CD8-positive, alpha-beta T cell (primary cell): ENCODE measurements at regions of chr15 and their contacts with region 1.

Region 1: GRCh38 chr15:60916679-60917460 is 312.2 kb downstream of the RORA start:
- DNase-seq: peak; percentile 70 to 95 (median 88)
- ATAC-seq: peak; percentile 99
- H3K4me3 ChIP-seq: no peak overlapping the region
- H3K4me3 Mint-ChIP-seq: no peak overlapping the region
- H3K27ac ChIP-seq: peak overlapping the region in 1 of 2 experiments; percentile 31
- H3K27ac Mint-ChIP-seq: peak overlapping the region; percentile 72
- H3K4me1 ChIP-seq: peaks cover 8% of the 10 kb centered on the region
- H3K4me1 Mint-ChIP-seq: peaks cover 11% of the 10 kb centered on the region
- H3K27me3 ChIP-seq: no peaks in the 10 kb centered on the region
- H3K27me3 Mint-ChIP-seq: no peaks in the 10 kb centered on the region
- CTCF ChIP-seq: peak; percentile 92

Region 2: GRCh38 chr15:59051873-59052861 is 1864.7 kb before region 1 on chr15:
- CTCF ChIA-PET with region 1: no interaction called
- POLR2A ChIA-PET with region 1: no interaction called
- intact Hi-C with region 1: no loop called
- DNase-seq: peak in 1 of 9 experiments; percentile 3
- ATAC-seq: no peak
- H3K4me3 ChIP-seq: no peak overlapping the region
- H3K4me3 Mint-ChIP-seq: no peak overlapping the region
- H3K27ac ChIP-seq: no peak overlapping the region
- H3K27ac Mint-ChIP-seq: peak overlapping the region; percentile 58
- H3K4me1 ChIP-seq: peaks cover 4% of the 10 kb centered on the region
- H3K4me1 Mint-ChIP-seq: peaks cover 26% of the 10 kb centered on the region
- H3K27me3 ChIP-seq: no peaks in the 10 kb centered on the region
- H3K27me3 Mint-ChIP-seq: no peaks in the 10 kb centered on the region
- CTCF ChIP-seq: no peak

Region 3: GRCh38 chr15:60478566-60479360 is 438.1 kb before region 1 on chr15 and contains the start of gene ICE2:
- CTCF ChIA-PET with region 1: no interaction called
- POLR2A ChIA-PET with region 1: no interaction called
- intact Hi-C with region 1: loop called in 1 of 2 experiments (anchors 1 kb)
- DNase-seq: peak; percentile 88 to 98 (median 96)
- ATAC-seq: peak; percentile 90
- H3K4me3 ChIP-seq: peak within 1 kb of the TSS; percentile 68 to 89
- H3K4me3 Mint-ChIP-seq: peak within 1 kb of the TSS; percentile 98
- H3K27ac ChIP-seq: peak within 1 kb of the TSS; percentile 85 to 92
- H3K27ac Mint-ChIP-seq: peak within 1 kb of the TSS; percentile 100
- H3K4me1 ChIP-seq: peaks cover 39% of the 10 kb centered on the region
- H3K4me1 Mint-ChIP-seq: peaks cover 72% of the 10 kb centered on the region
- H3K27me3 ChIP-seq: no peaks in the 10 kb centered on the region
- H3K27me3 Mint-ChIP-seq: no peaks in the 10 kb centered on the region
- CTCF ChIP-seq: no peak
- total RNA-seq, gene ICE2: 13.9 to 18.3 TPM

Region 4: GRCh38 chr15:60592371-60593169 is 324.3 kb before region 1 on chr15:
- CTCF ChIA-PET with region 1: interaction called, 100 read pairs
- POLR2A ChIA-PET with region 1: interaction called, 9 read pairs
- intact Hi-C with region 1: no loop called
- DNase-seq: peak; percentile 71 to 93 (median 87)
- ATAC-seq: peak; percentile 88
- H3K4me3 ChIP-seq: peak overlapping the region; percentile 71 to 81
- H3K4me3 Mint-ChIP-seq: peak overlapping the region; percentile 84
- H3K27ac ChIP-seq: peak overlapping the region; percentile 75 to 83
- H3K27ac Mint-ChIP-seq: peak overlapping the region; percentile 88
- H3K4me1 ChIP-seq: peaks cover 33% of the 10 kb centered on the region
- H3K4me1 Mint-ChIP-seq: peaks cover 35% of the 10 kb centered on the region
- H3K27me3 ChIP-seq: no peaks in the 10 kb centered on the region
- H3K27me3 Mint-ChIP-seq: no peaks in the 10 kb centered on the region
- CTCF ChIP-seq: no peak

Region 5: DNA sequence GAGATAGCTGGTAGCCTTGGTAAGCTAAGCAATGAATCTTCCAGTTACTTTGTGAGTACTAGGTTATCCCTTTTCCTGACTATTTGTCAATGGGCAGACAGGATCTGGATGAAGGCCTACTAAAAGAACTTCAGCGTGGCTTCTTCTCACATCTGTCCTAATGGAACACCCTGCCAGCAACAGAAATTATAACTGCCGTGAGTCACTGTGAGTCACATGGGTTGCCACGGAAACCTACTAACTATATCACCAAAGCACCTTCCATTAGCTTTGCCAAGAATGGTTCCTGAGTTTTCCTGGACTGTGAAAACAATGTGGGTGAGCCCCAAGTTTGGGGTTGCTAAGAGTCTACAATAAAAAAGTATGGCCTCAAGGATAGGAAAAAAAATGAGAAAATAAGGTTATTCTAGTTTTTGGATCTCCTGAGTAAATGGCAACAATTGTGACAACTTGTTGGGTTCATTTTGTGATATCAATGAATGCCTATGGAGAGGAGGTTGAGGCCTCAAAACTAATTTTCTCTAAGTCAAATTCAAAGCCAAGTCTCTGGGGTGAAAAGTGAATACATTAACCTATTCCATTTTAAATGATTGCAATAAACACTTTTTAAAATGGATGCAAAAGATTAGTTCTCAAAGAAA is 242.8 kb before region 1 on chr15:
- CTCF ChIA-PET with region 1: interaction called, 11 read pairs
- POLR2A ChIA-PET with region 1: no interaction called
- intact Hi-C with region 1: no loop called
- DNase-seq: peak in 2 of 9 experiments; percentile 15 to 22
- ATAC-seq: no peak
- H3K4me3 ChIP-seq: no peak overlapping the region
- H3K4me3 Mint-ChIP-seq: no peak overlapping the region
- H3K27ac ChIP-seq: no peak overlapping the region
- H3K27ac Mint-ChIP-seq: no peak overlapping the region
- H3K4me1 ChIP-seq: no peaks in the 10 kb centered on the region
- H3K4me1 Mint-ChIP-seq: peaks cover 2% of the 10 kb centered on the region
- H3K27me3 ChIP-seq: no peaks in the 10 kb centered on the region
- H3K27me3 Mint-ChIP-seq: no peaks in the 10 kb centered on the region
- CTCF ChIP-seq: no peak

Region 6: DNA sequence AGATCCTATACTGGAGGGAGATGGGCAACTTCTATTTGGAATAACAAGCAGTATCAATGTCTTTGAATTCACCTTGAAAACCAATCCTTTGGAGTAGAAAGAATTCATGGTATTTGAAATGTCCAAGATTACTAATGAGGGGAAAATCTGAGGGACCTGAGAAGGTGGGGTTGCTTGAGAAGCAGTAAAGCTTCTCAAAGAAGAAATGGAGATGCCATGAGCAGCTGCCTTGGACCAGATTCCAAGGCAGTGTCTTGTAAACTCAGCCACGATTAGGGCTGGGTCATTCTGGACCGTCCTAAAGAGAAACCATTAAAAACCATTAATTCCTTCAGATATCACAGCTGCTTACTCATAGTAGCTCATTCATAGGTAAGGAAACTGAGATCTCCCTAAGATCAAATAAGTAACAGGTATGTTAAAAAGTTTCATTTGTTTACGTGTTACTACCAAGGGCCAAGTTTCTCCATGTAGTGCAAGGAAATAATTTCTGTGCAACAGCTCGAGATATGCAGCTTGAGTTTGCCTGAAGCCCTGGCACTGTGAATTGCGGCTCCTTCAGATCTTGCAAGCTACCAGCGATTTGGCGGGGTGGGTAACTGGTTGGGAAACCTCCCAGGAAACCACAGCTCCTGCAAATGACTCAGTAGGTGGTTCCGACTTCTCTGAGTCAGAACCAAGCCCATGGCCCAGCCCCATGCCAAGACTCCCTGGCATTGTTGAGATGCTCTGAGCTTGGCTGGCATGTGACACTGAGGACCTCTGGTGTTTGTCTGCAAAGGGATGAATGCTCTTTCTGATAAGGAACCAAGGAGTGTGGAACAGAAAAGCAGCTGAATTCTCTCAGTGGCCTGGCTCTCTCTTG is 15.4 kb after region 1 on chr15:
- CTCF ChIA-PET with region 1: interaction called, 19 read pairs
- POLR2A ChIA-PET with region 1: interaction called, 5 read pairs
- intact Hi-C with region 1: no loop called
- DNase-seq: peak; percentile 6 to 77 (median 52)
- ATAC-seq: peak; percentile 73
- H3K4me3 ChIP-seq: no peak overlapping the region
- H3K4me3 Mint-ChIP-seq: no peak overlapping the region
- H3K27ac ChIP-seq: no peak overlapping the region
- H3K27ac Mint-ChIP-seq: no peak overlapping the region
- H3K4me1 ChIP-seq: peaks cover 8% of the 10 kb centered on the region
- H3K4me1 Mint-ChIP-seq: peaks cover 7% of the 10 kb centered on the region
- H3K27me3 ChIP-seq: no peaks in the 10 kb centered on the region
- H3K27me3 Mint-ChIP-seq: peaks cover 3% of the 10 kb centered on the region
- CTCF ChIP-seq: no peak

Region 7: GRCh38 chr15:61130945-61131942 is 214.4 kb after region 1 on chr15:
- CTCF ChIA-PET with region 1: no interaction called
- POLR2A ChIA-PET with region 1: no interaction called
- intact Hi-C with region 1: no loop called
- DNase-seq: no peak
- ATAC-seq: no peak
- H3K4me3 ChIP-seq: no peak overlapping the region
- H3K4me3 Mint-ChIP-seq: no peak overlapping the region
- H3K27ac ChIP-seq: no peak overlapping the region
- H3K27ac Mint-ChIP-seq: no peak overlapping the region
- H3K4me1 ChIP-seq: no peaks in the 10 kb centered on the region
- H3K4me1 Mint-ChIP-seq: no peaks in the 10 kb centered on the region
- H3K27me3 ChIP-seq: no peaks in the 10 kb centered on the region
- H3K27me3 Mint-ChIP-seq: peaks cover 23% of the 10 kb centered on the region
- CTCF ChIP-seq: no peak

Region 8: DNA sequence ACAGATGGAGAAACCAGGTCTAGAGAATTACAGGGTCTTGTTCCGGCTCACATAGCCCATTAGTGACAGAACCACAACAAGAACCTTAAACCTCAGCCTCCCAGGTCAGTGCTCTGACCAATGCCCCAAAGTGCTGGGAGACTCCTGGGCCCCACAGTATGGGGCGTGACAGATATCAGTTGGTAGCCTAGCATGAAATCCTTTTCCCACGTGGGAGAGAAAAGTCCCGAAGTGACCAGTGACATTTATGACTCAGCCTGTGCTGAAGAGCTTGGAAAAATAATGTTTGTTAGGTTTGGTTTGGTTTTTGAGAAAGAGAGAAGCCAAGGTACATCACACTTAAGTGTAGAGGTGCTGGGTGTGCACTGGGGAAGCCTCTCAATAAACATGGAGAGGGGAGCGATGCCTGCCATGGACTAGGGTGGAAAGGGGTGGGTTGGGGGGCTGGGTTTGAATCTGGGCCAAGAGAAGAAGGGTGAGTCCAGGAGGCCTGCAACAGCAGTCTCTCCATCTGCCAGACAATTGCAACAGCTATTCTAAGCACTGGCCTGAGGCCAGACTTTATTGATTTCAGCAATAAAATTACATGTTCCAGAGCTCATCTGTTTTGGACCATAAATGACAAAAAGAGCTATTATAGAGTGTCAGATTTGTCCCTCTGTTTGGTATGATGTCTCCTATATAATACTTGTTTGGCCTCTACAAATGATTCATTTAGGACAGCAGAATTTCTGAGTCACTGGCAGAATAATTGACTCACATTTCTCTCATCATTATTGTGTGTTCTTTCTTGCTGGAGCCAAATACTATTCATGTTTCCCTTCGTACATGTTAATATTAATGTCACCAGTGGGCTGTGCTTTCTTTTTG is 1193.3 kb after region 1 on chr15:
- CTCF ChIA-PET with region 1: no interaction called
- POLR2A ChIA-PET with region 1: no interaction called
- intact Hi-C with region 1: no loop called
- DNase-seq: no peak
- ATAC-seq: no peak
- H3K4me3 ChIP-seq: no peak overlapping the region
- H3K4me3 Mint-ChIP-seq: no peak overlapping the region
- H3K27ac ChIP-seq: no peak overlapping the region
- H3K27ac Mint-ChIP-seq: no peak overlapping the region
- H3K4me1 ChIP-seq: no peaks in the 10 kb centered on the region
- H3K4me1 Mint-ChIP-seq: no peaks in the 10 kb centered on the region
- H3K27me3 ChIP-seq: no peaks in the 10 kb centered on the region
- H3K27me3 Mint-ChIP-seq: peaks cover 2% of the 10 kb centered on the region
- CTCF ChIP-seq: no peak